Head of caudate nucleus (tissue), 42 donors: ENCODE measurements at regions of chr19 and their contacts with region 1.

Region 1: DNA sequence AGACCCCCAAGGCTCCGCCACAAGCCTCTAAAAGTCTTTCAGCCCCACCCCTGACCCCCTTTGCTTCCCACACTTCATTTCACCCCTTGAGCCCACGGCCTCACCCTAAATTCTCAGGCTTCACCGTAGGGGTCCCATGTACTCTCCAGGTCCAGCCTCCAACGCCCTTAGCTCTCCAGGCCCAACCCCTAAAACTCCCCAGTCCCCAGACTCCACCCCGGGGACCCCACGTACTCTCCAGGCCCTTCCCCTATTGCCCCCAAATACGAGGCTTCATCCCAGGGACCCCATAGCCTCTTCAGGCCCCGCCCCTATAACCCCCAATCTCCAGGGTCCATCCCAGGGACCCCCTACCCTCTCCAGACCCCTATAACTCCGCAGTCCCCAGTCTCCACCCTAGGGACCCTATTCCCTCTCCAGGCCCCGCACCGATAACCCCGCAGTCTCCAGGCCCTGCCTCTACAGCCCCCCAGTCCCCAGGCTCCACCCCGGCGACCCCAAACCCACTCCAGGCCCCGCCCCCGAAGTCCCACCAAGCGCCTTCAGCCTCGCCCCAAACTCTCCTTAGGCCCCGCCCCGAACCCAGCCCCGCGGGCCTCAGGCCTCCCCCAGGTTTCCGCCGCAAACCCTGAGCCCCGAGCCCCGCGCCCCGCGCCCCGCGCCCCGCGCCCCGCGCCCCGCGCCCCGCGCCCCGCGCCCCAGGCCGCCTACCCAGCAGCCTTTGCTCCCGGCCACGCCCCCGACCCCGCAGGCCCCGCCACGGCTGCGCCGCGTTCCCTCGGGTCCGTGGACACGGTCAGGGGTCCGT is 540 bp downstream of the MED16 start:
- DNase-seq: no peak

Region 2: GRCh38 chr19:796692-797527 is 95.5 kb before region 1 on chr19 and contains the start of gene PTBP1:
- intact Hi-C with region 1: loop called (anchors 5 kb)
- DNase-seq: peak; percentile 99 to 100 (median 100)

Region 3: DNA sequence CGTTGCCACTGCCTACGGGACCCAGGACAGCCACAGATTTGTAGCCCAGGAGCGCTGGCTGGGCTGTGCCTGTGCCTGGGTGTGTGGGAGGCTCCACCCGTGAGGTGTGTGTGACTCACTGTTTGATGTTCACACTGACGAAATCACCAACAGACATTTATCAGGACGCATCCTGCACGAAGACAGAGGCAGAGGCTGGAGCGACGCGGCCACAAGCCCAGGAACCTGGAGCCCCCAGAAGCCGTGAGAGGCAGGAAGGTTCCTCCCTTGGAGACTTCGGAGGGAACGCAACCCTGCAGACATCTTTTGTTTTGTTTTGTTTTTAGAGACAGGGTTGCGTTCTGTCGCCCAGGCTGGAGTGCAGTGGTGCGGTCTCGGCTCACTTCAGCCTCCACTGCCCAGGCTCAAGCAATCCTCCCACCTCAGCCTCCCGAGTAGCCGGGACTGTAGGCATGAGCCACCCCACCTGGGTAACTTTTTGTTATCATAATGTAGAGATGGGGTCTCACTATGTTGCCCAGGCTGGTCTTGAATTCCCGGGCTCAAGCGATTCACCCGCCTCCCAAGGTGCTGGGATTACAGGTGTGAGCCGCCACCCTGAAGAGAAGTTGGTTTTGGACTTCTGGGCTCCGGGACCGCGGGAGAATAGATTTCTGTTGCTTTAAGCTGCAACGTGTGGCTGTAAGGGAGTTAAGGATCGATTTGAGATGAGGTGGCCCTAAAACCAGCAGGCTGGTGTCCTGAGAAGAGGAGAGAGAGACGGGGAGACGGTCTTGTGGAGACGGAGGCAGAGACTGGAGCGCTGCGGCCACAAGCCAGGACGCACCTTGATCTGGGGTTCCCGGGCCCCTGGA is 66.7 kb after region 1 on chr19:
- intact Hi-C with region 1: no loop called
- DNase-seq: peak; percentile 15 to 89 (median 61)